Sigmoid colon (tissue), 7 donors: ENCODE measurements at regions of chr5 and their contacts with region 1.

Region 1: GRCh38 chr5:134904630-134905245 is at the start of gene PCBD2:
- DNase-seq: peak; percentile 94
- H3K4me3 ChIP-seq: peak within 1 kb of the TSS; percentile 62 to 81 (median 76)
- H3K27ac ChIP-seq: peak within 1 kb of the TSS; percentile 91 to 99 (median 97)
- H3K4me1 ChIP-seq: peaks cover 0 to 6% (median 0%) of the 10 kb centered on the region in 4 donors
- H3K27me3 ChIP-seq: no peaks in the 10 kb centered on the region
- CTCF ChIP-seq: peak; percentile 68 to 88 (median 78)
- EP300 ChIP-seq: no peak
- POLR2A ChIP-seq: no peak
- total RNA-seq, gene PCBD2: 4.2 to 10.8 (median 7.8) TPM

Region 2: GRCh38 chr5:134738133-134738962 is 166.4 kb before region 1 on chr5 and contains the start of gene CAMLG:
- intact Hi-C with region 1: loop called (anchors 2 kb)
- DNase-seq: peak; percentile 99
- H3K4me3 ChIP-seq: peak within 1 kb of the TSS; percentile 68 to 90 (median 74)
- H3K27ac ChIP-seq: peak within 1 kb of the TSS; percentile 91 to 95 (median 94)
- H3K4me1 ChIP-seq: peaks cover 0 to 24% (median 18%) of the 10 kb centered on the region in 4 donors
- H3K27me3 ChIP-seq: no peaks in the 10 kb centered on the region
- CTCF ChIP-seq: peak in 1 of 4 experiments; percentile 23
- EP300 ChIP-seq: peak in 1 of 4 donors; percentile 22
- POLR2A ChIP-seq: peak; percentile 90 to 95
- total RNA-seq, gene CAMLG: 60.5 to 81.3 (median 65.1) TPM

Region 3: GRCh38 chr5:134845852-134846640 is 58.7 kb before region 1 on chr5 and contains the start of gene C5orf24:
- intact Hi-C with region 1: loop called (anchors 1 kb)
- DNase-seq: peak; percentile 98
- H3K4me3 ChIP-seq: peak within 1 kb of the TSS; percentile 82 to 99 (median 86)
- H3K27ac ChIP-seq: peak within 1 kb of the TSS; percentile 94 to 100 (median 97)
- H3K4me1 ChIP-seq: peaks cover 0 to 44% (median 30%) of the 10 kb centered on the region in 4 donors
- H3K27me3 ChIP-seq: no peaks in the 10 kb centered on the region
- CTCF ChIP-seq: no peak
- EP300 ChIP-seq: peak in 1 of 4 donors; percentile 8
- POLR2A ChIP-seq: peak; percentile 58 to 65
- total RNA-seq, gene C5orf24: 38.0 to 82.0 (median 70.8) TPM

Region 4: GRCh38 chr5:134873987-134874830 is 30.5 kb before region 1 on chr5 and contains the start of gene TXNDC15:
- intact Hi-C with region 1: loop called (anchors 1 kb)
- DNase-seq: peak; percentile 94
- H3K4me3 ChIP-seq: peak within 1 kb of the TSS; percentile 57 to 88 (median 74)
- H3K27ac ChIP-seq: peak within 1 kb of the TSS; percentile 95 to 99 (median 96)
- H3K4me1 ChIP-seq: peaks cover 0 to 23% (median 16%) of the 10 kb centered on the region in 4 donors
- H3K27me3 ChIP-seq: no peaks in the 10 kb centered on the region
- CTCF ChIP-seq: no peak
- EP300 ChIP-seq: no peak
- POLR2A ChIP-seq: peak; percentile 35 to 36
- total RNA-seq, gene TXNDC15: 69.0 to 123 (median 95.4) TPM

Region 5: GRCh38 chr5:134982230-134982629 is 77.5 kb after region 1 on chr5:
- intact Hi-C with region 1: no loop called
- DNase-seq: no peak
- H3K4me3 ChIP-seq: no peak overlapping the region
- H3K27ac ChIP-seq: no peak overlapping the region
- H3K4me1 ChIP-seq: no peaks in the 10 kb centered on the region
- H3K27me3 ChIP-seq: no peaks in the 10 kb centered on the region
- CTCF ChIP-seq: no peak
- EP300 ChIP-seq: no peak
- POLR2A ChIP-seq: no peak